CD8-positive, alpha-beta memory T cell (primary cell): ENCODE measurements at regions of chr14 and their contacts with region 1.

Region 1: GRCh38 chr14:65308536-65308935 is 104.0 kb upstream of the FUT8 start:
- DNase-seq: no peak
- H3K4me3 ChIP-seq: no peak overlapping the region
- H3K4me3 Mint-ChIP-seq: no peak overlapping the region
- H3K27ac ChIP-seq: no peak overlapping the region
- H3K27ac Mint-ChIP-seq: no peak overlapping the region
- H3K4me1 ChIP-seq: peaks cover 4% of the 10 kb centered on the region
- H3K4me1 Mint-ChIP-seq: peaks cover 15 to 31% (median 22%) of the 10 kb centered on the region in 3 donors
- H3K27me3 ChIP-seq: no peaks in the 10 kb centered on the region
- H3K27me3 Mint-ChIP-seq: peaks cover 0 to 5% of the 10 kb centered on the region in 2 donors

Region 2: GRCh38 chr14:65243766-65244442 is 64.6 kb before region 1 on chr14:
- CTCF ChIA-PET with region 1: no interaction called
- POLR2A ChIA-PET with region 1: interaction called, 13 read pairs
- DNase-seq: no peak
- H3K4me3 ChIP-seq: no peak overlapping the region
- H3K4me3 Mint-ChIP-seq: no peak overlapping the region
- H3K27ac ChIP-seq: no peak overlapping the region
- H3K27ac Mint-ChIP-seq: no peak overlapping the region
- H3K4me1 ChIP-seq: peaks cover 16% of the 10 kb centered on the region
- H3K4me1 Mint-ChIP-seq: peaks cover 4 to 9% (median 5%) of the 10 kb centered on the region in 3 donors
- H3K27me3 ChIP-seq: no peaks in the 10 kb centered on the region
- H3K27me3 Mint-ChIP-seq: peaks cover 0 to 1% of the 10 kb centered on the region in 2 donors

Region 3: GRCh38 chr14:65434214-65434850 is 125.8 kb after region 1 on chr14:
- CTCF ChIA-PET with region 1: no interaction called
- POLR2A ChIA-PET with region 1: no interaction called
- DNase-seq: no peak
- H3K4me3 ChIP-seq: no peak overlapping the region
- H3K4me3 Mint-ChIP-seq: peak overlapping the region in 1 of 7 donors; percentile 26
- H3K27ac ChIP-seq: no peak overlapping the region
- H3K27ac Mint-ChIP-seq: peak overlapping the region in 1 of 8 donors; percentile 12
- H3K4me1 ChIP-seq: peaks cover 21% of the 10 kb centered on the region
- H3K4me1 Mint-ChIP-seq: peaks cover 54 to 72% (median 67%) of the 10 kb centered on the region in 3 donors
- H3K27me3 ChIP-seq: no peaks in the 10 kb centered on the region
- H3K27me3 Mint-ChIP-seq: no peaks in the 10 kb centered on the region

Region 4: GRCh38 chr14:66228267-66228970 is 919.9 kb after region 1 on chr14:
- CTCF ChIA-PET with region 1: no interaction called
- POLR2A ChIA-PET with region 1: no interaction called
- DNase-seq: no peak
- H3K4me3 ChIP-seq: no peak overlapping the region
- H3K4me3 Mint-ChIP-seq: no peak overlapping the region
- H3K27ac ChIP-seq: no peak overlapping the region
- H3K27ac Mint-ChIP-seq: no peak overlapping the region
- H3K4me1 ChIP-seq: no peaks in the 10 kb centered on the region
- H3K4me1 Mint-ChIP-seq: no peaks in the 10 kb centered on the region
- H3K27me3 ChIP-seq: no peaks in the 10 kb centered on the region
- H3K27me3 Mint-ChIP-seq: peaks cover 0 to 42% of the 10 kb centered on the region in 2 donors